ENCODE measurements at regions of chr9 and their contacts with region 1.

Region 1: DNA sequence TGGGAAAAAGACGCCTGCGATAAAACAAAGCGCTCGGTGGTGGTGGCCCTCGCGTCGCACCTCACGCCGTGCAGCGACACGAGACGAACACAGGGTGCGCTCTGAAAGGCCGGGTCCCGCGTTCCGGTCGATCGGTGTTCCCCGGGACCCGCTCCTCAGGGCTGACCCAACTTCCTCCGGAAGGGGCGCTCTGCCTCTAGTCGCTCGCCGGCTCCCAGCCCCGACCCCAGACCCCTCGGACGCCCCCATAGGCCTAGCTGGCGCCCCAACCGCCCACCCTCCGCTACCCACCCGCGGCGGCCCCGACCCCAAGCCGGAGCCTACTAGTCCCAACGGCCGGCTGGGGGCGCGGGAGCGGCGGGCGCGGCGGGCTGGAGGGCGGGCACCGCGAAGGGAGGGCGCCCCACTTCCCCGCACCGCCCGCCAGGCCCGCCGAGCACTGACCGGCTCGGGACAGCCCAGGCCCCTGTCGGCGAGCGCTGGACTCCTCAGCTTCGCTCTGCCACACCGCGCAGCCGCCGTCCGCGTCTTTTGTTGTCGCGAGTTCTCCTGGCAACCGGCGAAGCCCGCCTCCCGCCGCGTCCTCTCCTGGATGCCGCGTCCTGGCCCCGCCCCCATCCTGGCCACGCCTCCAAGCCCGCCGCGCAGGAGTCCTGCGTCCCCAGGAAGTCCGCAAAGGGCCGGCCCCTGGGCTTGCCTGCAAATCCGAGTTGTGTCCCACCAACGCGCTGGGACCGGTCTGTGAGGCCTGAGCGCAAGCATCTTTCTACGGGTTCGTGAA is at the start of gene KIF27:
- DNase-seq: peak; percentile 93 to 98 (median 96)
- ATAC-seq: peak; percentile 84
- H3K4me3 ChIP-seq: peak within 1 kb of the TSS; percentile 64 to 86
- H3K4me3 Mint-ChIP-seq: peak within 1 kb of the TSS; percentile 96
- H3K27ac ChIP-seq: peak within 1 kb of the TSS; percentile 92 to 93
- H3K27ac Mint-ChIP-seq: peak within 1 kb of the TSS; percentile 97
- H3K4me1 ChIP-seq: peaks cover 8% of the 10 kb centered on the region
- H3K4me1 Mint-ChIP-seq: peaks cover 15% of the 10 kb centered on the region
- H3K27me3 ChIP-seq: no peaks in the 10 kb centered on the region
- H3K27me3 Mint-ChIP-seq: no peaks in the 10 kb centered on the region
- CTCF ChIP-seq: peak; percentile 58
- total RNA-seq, gene KIF27: 2.9 to 3.8 TPM

Region 2: DNA sequence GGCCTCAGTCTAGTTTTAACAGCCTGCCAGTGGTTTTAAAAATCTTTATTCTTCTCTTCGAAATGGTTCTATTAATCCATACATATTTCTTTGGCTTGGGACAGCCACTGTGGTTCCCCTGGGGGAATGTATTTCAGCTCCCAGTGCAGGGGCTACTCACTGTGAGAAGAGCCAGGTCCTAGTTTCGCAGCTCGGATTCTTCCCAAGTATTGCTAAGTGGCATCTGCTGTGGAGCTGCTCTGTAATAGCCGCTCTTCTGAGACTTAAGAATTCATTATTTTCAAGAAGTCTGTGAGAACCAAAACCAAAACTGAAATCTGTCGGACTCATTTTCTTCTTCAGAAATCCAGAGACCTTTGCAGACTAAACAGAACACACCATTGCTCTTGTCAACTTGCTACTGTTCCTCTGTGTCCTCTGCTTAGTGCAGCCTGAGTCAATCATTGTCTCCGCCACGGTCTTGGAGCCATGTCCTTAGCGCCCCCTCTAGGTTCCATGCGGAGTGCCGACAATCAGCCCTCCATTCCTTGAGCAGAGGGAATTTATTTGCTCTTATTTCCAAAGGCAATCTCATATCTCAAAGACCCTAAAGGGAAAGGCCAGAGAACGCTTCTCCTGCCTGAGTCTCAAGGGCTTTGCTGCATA is 1454.4 kb before region 1 on chr9:
- CTCF ChIA-PET with region 1: no interaction called
- POLR2A ChIA-PET with region 1: no interaction called
- intact Hi-C with region 1: no loop called
- DNase-seq: no peak
- ATAC-seq: no peak
- H3K4me3 ChIP-seq: no peak overlapping the region
- H3K4me3 Mint-ChIP-seq: no peak overlapping the region
- H3K27ac ChIP-seq: no peak overlapping the region
- H3K27ac Mint-ChIP-seq: no peak overlapping the region
- H3K4me1 ChIP-seq: no peaks in the 10 kb centered on the region
- H3K4me1 Mint-ChIP-seq: no peaks in the 10 kb centered on the region
- H3K27me3 ChIP-seq: no peaks in the 10 kb centered on the region
- H3K27me3 Mint-ChIP-seq: no peaks in the 10 kb centered on the region
- CTCF ChIP-seq: no peak

Region 3: GRCh38 chr9:83622939-83623678 is 298.0 kb before region 1 on chr9 and contains the start of gene IDNK:
- CTCF ChIA-PET with region 1: interaction called, 7 read pairs
- POLR2A ChIA-PET with region 1: interaction called, 3 read pairs
- intact Hi-C with region 1: loop called (anchors 2 kb)
- DNase-seq: peak; percentile 21 to 82 (median 59)
- ATAC-seq: peak; percentile 88
- H3K4me3 ChIP-seq: peak within 1 kb of the TSS; percentile 67 to 74
- H3K4me3 Mint-ChIP-seq: peak within 1 kb of the TSS; percentile 92
- H3K27ac ChIP-seq: peak within 1 kb of the TSS; percentile 78 to 82
- H3K27ac Mint-ChIP-seq: peak within 1 kb of the TSS; percentile 98
- H3K4me1 ChIP-seq: peaks cover 19% of the 10 kb centered on the region
- H3K4me1 Mint-ChIP-seq: peaks cover 33% of the 10 kb centered on the region
- H3K27me3 ChIP-seq: no peaks in the 10 kb centered on the region
- H3K27me3 Mint-ChIP-seq: no peaks in the 10 kb centered on the region
- CTCF ChIP-seq: no peak
- total RNA-seq, gene IDNK: 4.3 to 4.6 TPM

Region 4: DNA sequence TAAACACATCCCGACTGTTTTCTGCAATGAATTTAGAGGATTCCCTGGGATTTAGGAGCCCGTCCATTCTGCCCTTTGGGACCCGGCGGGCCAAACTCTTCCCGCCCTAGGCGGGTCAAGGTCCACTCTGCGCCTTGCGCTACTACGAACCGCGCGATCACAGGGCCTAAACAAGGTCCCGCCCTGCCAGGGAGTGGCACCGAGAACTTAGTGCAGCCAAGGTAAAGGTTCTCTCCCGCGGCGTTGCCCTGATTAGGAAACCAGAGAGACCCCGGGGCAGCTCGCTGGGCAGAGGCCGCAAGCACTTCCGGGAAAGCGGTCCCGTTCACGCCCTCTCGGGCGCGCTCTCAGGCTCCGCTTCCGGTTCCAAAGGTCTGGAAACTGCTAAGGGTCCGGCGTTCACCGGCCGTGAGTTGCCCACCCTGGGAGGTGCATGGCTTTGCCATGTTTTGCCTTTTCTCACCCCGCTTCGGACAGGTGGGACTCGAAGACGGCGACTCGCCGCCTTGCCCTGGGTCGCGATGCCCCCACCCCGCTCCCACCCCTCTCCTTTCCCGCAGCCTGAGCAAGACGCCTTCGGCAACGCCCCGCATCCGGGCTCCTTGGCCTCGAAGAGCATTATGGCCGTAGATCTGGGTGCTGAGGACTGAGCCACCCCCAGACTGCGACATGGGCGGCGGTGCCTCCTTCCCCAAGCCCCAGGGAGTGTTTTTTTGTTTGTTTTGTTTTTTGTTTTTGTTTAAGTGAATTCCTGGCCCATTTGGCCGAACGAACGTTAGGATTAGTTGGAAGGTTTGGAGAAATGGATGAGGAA is 35.5 kb after region 1 on chr9:
- CTCF ChIA-PET with region 1: interaction called, 3 read pairs
- POLR2A ChIA-PET with region 1: interaction called, 3 read pairs
- intact Hi-C with region 1: loop called in 1 of 2 experiments (anchors 1 kb)
- DNase-seq: peak in 8 of 9 experiments; percentile 38 to 79 (median 63)
- ATAC-seq: peak; percentile 78
- H3K4me3 ChIP-seq: peak overlapping the region; percentile 87 to 90
- H3K4me3 Mint-ChIP-seq: peak overlapping the region; percentile 95
- H3K27ac ChIP-seq: peak overlapping the region; percentile 64 to 80
- H3K27ac Mint-ChIP-seq: peak overlapping the region; percentile 86
- H3K4me1 ChIP-seq: peaks cover 8% of the 10 kb centered on the region
- H3K4me1 Mint-ChIP-seq: peaks cover 21% of the 10 kb centered on the region
- H3K27me3 ChIP-seq: no peaks in the 10 kb centered on the region
- H3K27me3 Mint-ChIP-seq: no peaks in the 10 kb centered on the region
- CTCF ChIP-seq: no peak

Region 5: DNA sequence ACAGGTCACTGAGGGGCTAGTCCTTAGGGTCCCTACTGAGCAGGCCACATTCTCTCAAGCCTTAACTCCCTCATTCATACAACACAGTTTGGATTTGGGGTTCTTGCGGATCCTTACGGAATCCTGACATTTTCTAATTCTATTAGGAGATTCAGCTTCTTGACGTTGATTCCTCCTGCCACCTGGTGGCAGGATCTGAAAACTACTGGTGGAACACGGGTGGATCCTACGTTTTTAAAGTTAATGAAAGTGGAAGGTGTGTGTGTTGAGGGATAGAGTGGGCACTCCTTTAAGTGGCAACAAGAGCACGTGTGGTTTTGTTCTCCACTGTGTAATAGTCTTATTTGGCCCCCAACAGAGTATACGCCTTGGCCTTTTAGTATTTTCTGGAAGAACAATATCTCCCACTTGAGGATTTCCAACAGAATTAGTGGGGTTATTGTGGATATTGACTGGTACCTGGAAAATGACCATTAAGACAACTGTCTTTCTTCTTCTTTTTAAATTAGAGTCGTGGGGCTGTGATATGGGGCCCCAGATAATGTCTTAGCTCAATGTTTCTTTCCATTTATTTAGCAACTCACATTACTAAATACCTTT is 394.3 kb after region 1 on chr9:
- CTCF ChIA-PET with region 1: no interaction called
- POLR2A ChIA-PET with region 1: interaction called, 3 read pairs
- intact Hi-C with region 1: loop called in 1 of 2 experiments (anchors 5 kb)
- DNase-seq: peak; percentile 13 to 69 (median 46)
- ATAC-seq: no peak
- H3K4me3 ChIP-seq: no peak overlapping the region
- H3K4me3 Mint-ChIP-seq: no peak overlapping the region
- H3K27ac ChIP-seq: no peak overlapping the region
- H3K27ac Mint-ChIP-seq: no peak overlapping the region
- H3K4me1 ChIP-seq: no peaks in the 10 kb centered on the region
- H3K4me1 Mint-ChIP-seq: no peaks in the 10 kb centered on the region
- H3K27me3 ChIP-seq: no peaks in the 10 kb centered on the region
- H3K27me3 Mint-ChIP-seq: peaks cover 2% of the 10 kb centered on the region
- CTCF ChIP-seq: peak; percentile 76

Measured in CD8-positive, alpha-beta T cell (primary cell).